ENCODE measurements at regions of chr9 and their contacts with region 1.

Region 1: GRCh38 chr9:121830441-121831140 is 179.2 kb downstream of the DAB2IP start:
- DNase-seq: no peak
- ATAC-seq: no peak
- H3K4me3 Mint-ChIP-seq: no peak overlapping the region
- H3K27ac Mint-ChIP-seq: no peak overlapping the region
- H3K4me1 Mint-ChIP-seq: no peaks in the 10 kb centered on the region
- H3K27me3 Mint-ChIP-seq: no peaks in the 10 kb centered on the region
- CTCF ChIP-seq: no peak

Region 2: GRCh38 chr9:121841771-121842611 is 11.4 kb after region 1 on chr9:
- CTCF ChIA-PET with region 1: no interaction called
- POLR2A ChIA-PET with region 1: no interaction called
- intact Hi-C with region 1: loop called (anchors 1 kb)
- DNase-seq: no peak
- ATAC-seq: no peak
- H3K4me3 Mint-ChIP-seq: no peak overlapping the region
- H3K27ac Mint-ChIP-seq: peak overlapping the region; percentile 63
- H3K4me1 Mint-ChIP-seq: peaks cover 16% of the 10 kb centered on the region
- H3K27me3 Mint-ChIP-seq: peaks cover 1% of the 10 kb centered on the region
- CTCF ChIP-seq: no peak